A673 (cell line): ENCODE measurements at regions of chr9 and their contacts with region 1.

Region 1: GRCh38 chr9:69421908-69422801 is 97.1 kb downstream of the ENTREP1 start:
- DNase-seq: peak; percentile 68
- H3K4me3 ChIP-seq: no peak overlapping the region
- H3K27ac ChIP-seq: no peak overlapping the region
- H3K4me1 ChIP-seq: no peaks in the 10 kb centered on the region
- H3K27me3 ChIP-seq: no peaks in the 10 kb centered on the region
- CTCF ChIP-seq: peak; percentile 75

Region 2: DNA sequence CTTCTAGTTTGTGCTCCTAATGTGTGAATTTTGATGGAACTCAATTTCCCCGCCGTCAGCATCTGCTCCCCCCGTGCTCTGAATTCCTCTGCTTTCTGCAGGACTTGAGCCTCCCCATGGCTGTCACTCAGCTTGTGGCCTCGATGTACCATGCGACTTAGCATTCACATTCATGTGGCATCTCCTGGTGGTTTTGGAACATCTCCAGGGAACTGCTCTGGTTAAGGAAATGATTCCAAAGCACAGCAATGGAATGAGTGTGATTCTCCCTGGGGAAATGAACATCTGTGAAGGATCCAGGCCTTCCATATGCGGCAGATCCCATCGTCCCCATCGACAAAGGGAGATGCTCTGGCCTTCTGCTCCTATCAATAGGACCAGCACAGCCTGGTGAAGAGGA is 21.9 kb after region 1 on chr9:
- CTCF ChIA-PET with region 1: no interaction called
- POLR2A ChIA-PET with region 1: no interaction called
- intact Hi-C with region 1: loop called (anchors 2 kb)
- DNase-seq: peak; percentile 42
- H3K4me3 ChIP-seq: no peak overlapping the region
- H3K27ac ChIP-seq: no peak overlapping the region
- H3K4me1 ChIP-seq: no peaks in the 10 kb centered on the region
- H3K27me3 ChIP-seq: peaks cover 15% of the 10 kb centered on the region
- CTCF ChIP-seq: no peak

Region 3: GRCh38 chr9:69672596-69673310 is 250.6 kb after region 1 on chr9:
- CTCF ChIA-PET with region 1: interaction called, 6 read pairs
- POLR2A ChIA-PET with region 1: no interaction called
- intact Hi-C with region 1: loop called (anchors 10 kb)
- DNase-seq: peak; percentile 95
- H3K4me3 ChIP-seq: peak overlapping the region; percentile 54
- H3K27ac ChIP-seq: no peak overlapping the region
- H3K4me1 ChIP-seq: peaks cover 6% of the 10 kb centered on the region
- H3K27me3 ChIP-seq: peaks cover 39% of the 10 kb centered on the region
- CTCF ChIP-seq: peak; percentile 92

Region 4: DNA sequence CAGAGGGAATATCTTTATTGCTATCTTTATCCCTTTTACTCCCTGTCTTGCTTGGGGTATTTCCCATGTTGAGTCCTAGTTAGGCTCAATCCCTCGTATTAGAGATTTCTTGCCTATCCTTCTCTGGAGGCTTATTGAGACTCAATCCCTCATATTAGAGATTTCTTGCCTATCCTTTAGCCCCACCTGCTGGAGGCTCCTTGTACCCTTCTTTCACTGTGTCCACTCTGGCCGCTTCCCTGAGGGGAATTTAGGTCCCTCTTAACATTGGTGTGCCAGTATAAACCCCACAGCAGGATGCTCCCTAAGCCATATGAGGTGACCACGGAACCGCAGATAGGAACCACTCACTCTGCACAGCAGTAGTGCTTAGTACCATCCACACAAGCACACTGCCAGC is 510.7 kb after region 1 on chr9:
- CTCF ChIA-PET with region 1: interaction called, 7 read pairs
- POLR2A ChIA-PET with region 1: no interaction called
- intact Hi-C with region 1: loop called (anchors 2 kb)
- DNase-seq: peak; percentile 60
- H3K4me3 ChIP-seq: no peak overlapping the region
- H3K27ac ChIP-seq: no peak overlapping the region
- H3K4me1 ChIP-seq: no peaks in the 10 kb centered on the region
- H3K27me3 ChIP-seq: peaks cover 3% of the 10 kb centered on the region
- CTCF ChIP-seq: peak; percentile 55